Ascending aorta (tissue), 2 donors: ENCODE measurements at regions of chr19 and their contacts with region 1.

Region 1: DNA sequence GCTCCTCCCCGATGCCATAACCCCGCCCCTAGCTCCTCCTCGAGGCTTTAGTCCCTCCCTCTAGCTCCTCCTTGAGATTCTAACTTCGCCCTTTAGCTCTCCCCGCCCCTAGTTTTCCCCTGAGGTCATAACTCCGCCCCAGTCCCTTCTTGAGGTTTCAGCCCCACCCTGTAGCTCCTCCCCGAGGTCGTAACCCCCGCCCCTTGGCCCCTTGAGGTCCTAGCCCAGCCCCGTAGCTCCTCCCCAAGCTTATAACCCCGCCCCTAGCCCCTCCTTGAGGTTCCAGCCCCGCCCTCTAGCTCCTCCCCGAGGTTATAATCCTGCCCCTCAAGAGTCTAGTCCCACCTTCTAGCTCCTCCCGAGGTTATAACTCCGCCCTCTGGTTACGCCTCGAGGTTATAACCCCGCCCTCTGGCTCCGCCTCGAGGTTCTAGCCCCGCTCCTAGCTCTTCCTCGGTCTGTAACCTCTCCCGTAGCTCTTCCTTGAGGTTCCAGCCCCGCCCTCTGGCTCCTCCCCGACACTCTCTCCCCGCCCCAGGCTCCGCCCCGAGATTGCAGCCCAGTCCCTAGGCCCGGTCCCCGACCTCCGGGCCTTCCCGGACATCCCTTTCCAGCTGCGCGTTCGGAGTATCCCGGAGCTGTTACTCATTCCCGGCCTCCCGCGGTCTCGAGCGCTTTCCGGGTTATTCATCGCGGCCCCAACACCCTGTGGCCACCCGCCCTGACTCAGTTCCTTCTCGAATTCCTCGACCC is 1.4 kb downstream of the PLAUR start:
- DNase-seq: peak; percentile 94 to 99
- H3K4me3 ChIP-seq: peak overlapping the region; percentile 75
- H3K27ac ChIP-seq: peak overlapping the region; percentile 90 to 93
- H3K4me1 ChIP-seq: peaks cover 3 to 13% of the 10 kb centered on the region in 2 donors
- H3K27me3 ChIP-seq: no peaks in the 10 kb centered on the region
- CTCF ChIP-seq: no peak

Region 2: GRCh38 chr19:43463381-43464136 is 205.0 kb before region 1 on chr19:
- intact Hi-C with region 1: loop called (anchors 2 kb)
- DNase-seq: peak; percentile 90 to 98
- H3K4me3 ChIP-seq: peak overlapping the region; percentile 58 to 69
- H3K27ac ChIP-seq: peak overlapping the region; percentile 73 to 88
- H3K4me1 ChIP-seq: peaks cover 0 to 8% of the 10 kb centered on the region in 2 donors
- H3K27me3 ChIP-seq: no peaks in the 10 kb centered on the region
- CTCF ChIP-seq: no peak

Region 3: DNA sequence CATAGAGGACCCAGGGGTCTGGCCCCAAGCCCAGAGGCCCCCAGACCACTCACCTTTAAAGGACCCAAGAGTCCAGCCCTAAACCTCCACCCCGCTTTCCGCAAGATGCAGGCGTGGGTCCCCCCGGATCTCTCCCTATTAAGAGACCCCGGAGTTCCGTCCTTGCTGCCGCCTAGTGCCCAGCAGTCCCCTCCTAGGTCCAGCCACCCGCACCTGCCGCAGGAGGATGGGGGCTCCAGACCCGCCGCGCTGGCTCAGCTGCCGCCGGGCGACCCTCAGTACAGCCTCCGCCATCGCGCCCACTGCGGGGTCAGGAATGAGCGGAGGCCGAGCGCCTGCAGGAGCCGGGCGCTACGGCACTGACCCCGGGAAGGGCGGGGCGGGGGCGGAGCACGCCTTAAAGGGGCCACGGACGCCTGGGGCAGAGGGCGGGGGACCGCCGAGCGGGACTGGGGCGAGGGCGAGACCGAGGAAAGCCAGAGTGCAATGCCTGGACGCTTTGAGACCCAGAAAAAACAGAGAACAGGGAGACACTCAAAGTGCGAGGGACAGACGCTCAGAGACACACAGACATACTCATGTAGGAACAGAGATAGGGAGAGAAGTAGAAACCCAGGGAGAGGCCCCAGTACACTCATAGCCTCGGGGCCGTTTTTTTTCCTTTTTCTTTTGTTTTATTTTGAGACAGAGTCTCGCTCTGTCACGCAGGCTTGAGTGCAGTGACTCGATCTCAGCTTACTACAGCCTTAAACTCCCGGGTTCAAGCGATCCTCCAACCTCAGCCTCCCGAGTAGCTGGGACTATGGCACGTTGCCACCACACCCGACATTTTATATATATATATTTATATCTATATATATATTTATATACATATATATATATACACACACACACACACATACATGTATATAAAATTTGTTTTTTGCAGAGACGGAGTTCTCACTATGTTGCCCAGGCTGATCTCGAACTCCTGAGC is 141.4 kb before region 1 on chr19 and contains the start of gene ETHE1:
- intact Hi-C with region 1: loop called (anchors 2 kb)
- DNase-seq: peak; percentile 40 to 92
- H3K4me3 ChIP-seq: peak within 1 kb of the TSS; percentile 76 to 91
- H3K27ac ChIP-seq: peak within 1 kb of the TSS; percentile 82 to 87
- H3K4me1 ChIP-seq: peaks cover 12 to 22% of the 10 kb centered on the region in 2 donors
- H3K27me3 ChIP-seq: no peaks in the 10 kb centered on the region
- CTCF ChIP-seq: no peak
- total RNA-seq, gene ETHE1: 118 TPM

Region 4: GRCh38 chr19:43575156-43575950 is 93.2 kb before region 1 on chr19 and contains the starts of genes PINLYP and XRCC1:
- intact Hi-C with region 1: loop called (anchors 1 kb)
- DNase-seq: peak; percentile 93 to 98
- H3K4me3 ChIP-seq: peak within 1 kb of the TSS; percentile 76 to 87
- H3K27ac ChIP-seq: peak within 1 kb of the TSS; percentile 67 to 86
- H3K4me1 ChIP-seq: peaks cover 9 to 10% of the 10 kb centered on the region in 2 donors
- H3K27me3 ChIP-seq: no peaks in the 10 kb centered on the region
- CTCF ChIP-seq: no peak
- total RNA-seq, gene PINLYP: 2.2 TPM
- total RNA-seq, gene XRCC1: 6.4 TPM

Region 5: DNA sequence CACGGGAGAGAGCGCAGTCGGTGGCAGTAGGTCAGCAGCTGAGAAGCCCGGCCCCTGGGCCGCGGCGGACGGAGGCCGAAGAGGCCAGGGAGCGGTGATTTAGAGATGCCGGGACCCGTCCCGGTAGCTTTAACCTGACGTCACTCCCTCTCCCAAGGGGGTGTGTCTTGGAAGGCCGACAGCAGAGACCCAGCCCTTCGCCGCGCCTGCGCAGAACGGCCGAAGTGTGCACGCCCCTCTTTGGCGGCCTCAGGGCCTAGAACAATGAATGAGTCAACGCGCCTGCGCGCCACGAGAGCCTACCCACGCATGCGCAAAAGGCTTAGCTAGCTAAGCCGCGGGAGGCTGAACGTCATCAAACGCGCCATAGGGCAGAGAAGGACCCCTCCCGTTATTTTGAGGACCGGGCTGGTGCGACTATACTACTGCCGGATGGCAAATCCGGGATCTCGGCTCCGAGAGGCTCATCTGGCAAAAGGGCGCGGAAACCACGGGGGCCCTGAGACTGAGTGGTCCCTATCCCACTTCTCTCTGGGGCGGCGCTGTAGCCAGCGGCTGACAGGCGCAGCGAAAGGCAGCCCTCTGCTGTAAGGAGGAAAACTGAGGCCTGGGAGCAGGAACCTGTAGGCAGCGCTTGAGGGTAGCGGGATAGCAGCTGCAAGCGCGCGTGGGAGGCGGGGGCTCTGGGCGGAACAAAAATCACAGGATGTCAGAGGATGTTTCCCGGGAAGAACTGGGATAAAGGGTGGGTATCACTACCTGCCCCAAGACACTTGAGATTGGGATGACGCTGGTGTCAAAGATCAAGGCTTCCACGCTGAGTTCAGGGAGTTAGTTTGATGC is 72.4 kb before region 1 on chr19 and contains the starts of genes IRGQ and ZNF576:
- intact Hi-C with region 1: loop called (anchors 1 kb)
- DNase-seq: peak; percentile 99 to 100
- H3K4me3 ChIP-seq: peak within 1 kb of the TSS; percentile 59 to 88
- H3K27ac ChIP-seq: peak within 1 kb of the TSS; percentile 94 to 99
- H3K4me1 ChIP-seq: peaks cover 22 to 23% of the 10 kb centered on the region in 2 donors
- H3K27me3 ChIP-seq: no peaks in the 10 kb centered on the region
- CTCF ChIP-seq: no peak
- total RNA-seq, gene IRGQ: 17.2 TPM
- total RNA-seq, gene ZNF576: 3.1 TPM

Region 6: GRCh38 chr19:43619262-43620060 is 49.1 kb before region 1 on chr19 and contains the start of gene ZNF428:
- intact Hi-C with region 1: loop called (anchors 1 kb)
- DNase-seq: peak; percentile 50 to 92
- H3K4me3 ChIP-seq: peak within 1 kb of the TSS; percentile 69 to 75
- H3K27ac ChIP-seq: peak within 1 kb of the TSS; percentile 87 to 89
- H3K4me1 ChIP-seq: peaks cover 0 to 7% of the 10 kb centered on the region in 2 donors
- H3K27me3 ChIP-seq: no peaks in the 10 kb centered on the region
- CTCF ChIP-seq: no peak
- total RNA-seq, gene ZNF428: 37.3 TPM

Region 7: GRCh38 chr19:43754503-43755255 is 86.1 kb after region 1 on chr19 and contains the start of gene SMG9:
- intact Hi-C with region 1: loop called (anchors 1 kb)
- DNase-seq: peak; percentile 87 to 98
- H3K4me3 ChIP-seq: peak within 1 kb of the TSS; percentile 77 to 92
- H3K27ac ChIP-seq: peak within 1 kb of the TSS; percentile 99
- H3K4me1 ChIP-seq: peaks cover 3 to 26% of the 10 kb centered on the region in 2 donors
- H3K27me3 ChIP-seq: no peaks in the 10 kb centered on the region
- CTCF ChIP-seq: no peak
- total RNA-seq, gene SMG9: 126 TPM